Panc1 (cell line): ENCODE measurements at regions of chr3 and their contacts with region 1.

Region 1: DNA sequence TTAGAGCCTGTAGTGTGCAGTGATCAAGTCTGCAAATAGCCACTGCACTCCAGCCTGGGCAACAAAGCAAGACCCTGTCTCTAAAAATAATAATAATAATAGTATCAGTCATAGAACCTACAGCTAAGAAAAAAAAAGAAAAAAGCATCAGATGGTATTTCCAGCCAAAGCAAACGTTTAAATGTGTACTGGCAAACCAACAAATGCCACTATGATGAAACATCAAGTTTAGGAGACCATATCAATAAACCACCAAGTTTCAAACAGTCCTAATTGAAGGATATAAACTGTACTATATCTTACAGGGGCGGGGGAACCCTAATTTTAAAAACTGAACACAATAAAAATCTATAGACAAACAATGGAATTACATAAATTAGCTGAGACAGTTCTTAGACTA is 6.4 kb downstream of the UBP1 start:
- DNase-seq: no peak
- ATAC-seq: no peak
- H3K4me3 ChIP-seq: no peak overlapping the region
- H3K27ac ChIP-seq: no peak overlapping the region
- H3K4me1 ChIP-seq: peaks cover 13% of the 10 kb centered on the region
- H3K27me3 ChIP-seq: no peaks in the 10 kb centered on the region
- CTCF ChIP-seq: no peak

Region 2: DNA sequence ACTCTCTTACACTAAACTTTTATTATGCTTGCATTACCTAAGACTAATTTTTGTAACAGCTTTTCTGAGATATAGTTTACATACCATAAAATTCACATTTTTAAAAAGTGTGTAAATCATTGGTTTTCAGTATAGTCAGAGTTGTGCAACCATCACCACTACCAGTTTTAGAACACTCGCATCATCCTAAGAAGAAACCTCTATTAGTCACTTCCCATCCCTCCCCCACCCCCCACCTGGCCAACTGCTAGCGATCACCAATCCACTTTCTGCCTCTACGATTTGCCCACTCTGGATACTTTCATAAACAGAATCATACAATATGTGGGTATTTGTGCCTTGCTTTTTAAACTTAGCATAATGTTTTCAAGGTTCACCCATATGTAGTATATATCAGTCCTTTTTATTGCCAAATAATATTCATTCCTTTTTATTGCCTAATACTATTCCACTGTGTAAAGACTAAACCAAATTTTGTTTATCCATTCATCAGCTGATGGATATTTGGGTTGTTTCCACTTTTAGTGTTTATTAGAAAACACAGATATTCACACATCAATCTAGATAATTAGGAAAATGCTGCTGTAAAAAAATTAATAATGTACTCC is 16.7 kb before region 1 on chr3:
- CTCF ChIA-PET with region 1: no interaction called
- POLR2A ChIA-PET with region 1: interaction called, 17 read pairs
- in situ Hi-C with region 1: no loop called
- intact Hi-C with region 1: no loop called
- DNase-seq: no peak
- ATAC-seq: no peak
- H3K4me3 ChIP-seq: no peak overlapping the region
- H3K27ac ChIP-seq: no peak overlapping the region
- H3K4me1 ChIP-seq: no peaks in the 10 kb centered on the region
- H3K27me3 ChIP-seq: no peaks in the 10 kb centered on the region
- CTCF ChIP-seq: no peak

Region 3: DNA sequence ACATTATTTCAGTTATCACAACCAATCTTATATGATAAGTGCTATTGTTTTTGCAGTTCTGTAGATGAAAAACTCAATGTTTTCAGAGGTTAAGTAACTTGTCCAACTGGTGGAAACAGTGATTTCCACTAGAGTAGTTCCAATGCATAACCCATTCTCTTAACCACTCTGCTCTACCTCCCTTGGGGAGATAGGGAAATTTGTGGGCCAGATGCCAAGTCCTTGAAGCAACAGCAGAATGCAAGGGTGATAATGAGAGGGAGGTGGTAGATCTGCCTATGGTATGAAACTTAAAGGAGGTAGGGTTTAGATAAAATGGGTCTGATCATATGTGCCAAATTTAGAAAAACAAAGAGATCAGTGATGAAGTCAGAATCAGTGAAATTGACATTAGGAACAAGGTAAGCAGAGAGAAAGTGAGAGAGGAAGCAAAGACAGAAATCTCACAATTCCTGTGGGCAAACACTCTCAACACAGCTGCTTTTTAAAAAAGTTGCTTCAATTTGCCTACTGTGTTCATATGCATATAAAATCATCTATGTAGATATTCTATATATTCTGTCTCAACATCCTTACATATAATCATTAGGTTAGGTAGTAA is 56.9 kb after region 1 on chr3:
- CTCF ChIA-PET with region 1: no interaction called
- POLR2A ChIA-PET with region 1: no interaction called
- in situ Hi-C with region 1: no loop called
- intact Hi-C with region 1: no loop called
- DNase-seq: no peak
- ATAC-seq: no peak
- H3K4me3 ChIP-seq: no peak overlapping the region
- H3K27ac ChIP-seq: no peak overlapping the region
- H3K4me1 ChIP-seq: no peaks in the 10 kb centered on the region
- H3K27me3 ChIP-seq: no peaks in the 10 kb centered on the region
- CTCF ChIP-seq: no peak

Region 4: GRCh38 chr3:33732394-33732793 is 298.6 kb after region 1 on chr3:
- CTCF ChIA-PET with region 1: no interaction called
- POLR2A ChIA-PET with region 1: interaction called, 12 read pairs
- in situ Hi-C with region 1: no loop called
- intact Hi-C with region 1: no loop called
- DNase-seq: no peak
- ATAC-seq: no peak
- H3K4me3 ChIP-seq: no peak overlapping the region
- H3K27ac ChIP-seq: no peak overlapping the region
- H3K4me1 ChIP-seq: no peaks in the 10 kb centered on the region
- H3K27me3 ChIP-seq: no peaks in the 10 kb centered on the region
- CTCF ChIP-seq: peak; percentile 54